Activated CD4-positive, alpha-beta T cell treated with anti-CD3 and anti-CD28 coated beads for 36 hours (primary cell): ENCODE measurements at regions of chr1 and their contacts with region 1.

Region 1: DNA sequence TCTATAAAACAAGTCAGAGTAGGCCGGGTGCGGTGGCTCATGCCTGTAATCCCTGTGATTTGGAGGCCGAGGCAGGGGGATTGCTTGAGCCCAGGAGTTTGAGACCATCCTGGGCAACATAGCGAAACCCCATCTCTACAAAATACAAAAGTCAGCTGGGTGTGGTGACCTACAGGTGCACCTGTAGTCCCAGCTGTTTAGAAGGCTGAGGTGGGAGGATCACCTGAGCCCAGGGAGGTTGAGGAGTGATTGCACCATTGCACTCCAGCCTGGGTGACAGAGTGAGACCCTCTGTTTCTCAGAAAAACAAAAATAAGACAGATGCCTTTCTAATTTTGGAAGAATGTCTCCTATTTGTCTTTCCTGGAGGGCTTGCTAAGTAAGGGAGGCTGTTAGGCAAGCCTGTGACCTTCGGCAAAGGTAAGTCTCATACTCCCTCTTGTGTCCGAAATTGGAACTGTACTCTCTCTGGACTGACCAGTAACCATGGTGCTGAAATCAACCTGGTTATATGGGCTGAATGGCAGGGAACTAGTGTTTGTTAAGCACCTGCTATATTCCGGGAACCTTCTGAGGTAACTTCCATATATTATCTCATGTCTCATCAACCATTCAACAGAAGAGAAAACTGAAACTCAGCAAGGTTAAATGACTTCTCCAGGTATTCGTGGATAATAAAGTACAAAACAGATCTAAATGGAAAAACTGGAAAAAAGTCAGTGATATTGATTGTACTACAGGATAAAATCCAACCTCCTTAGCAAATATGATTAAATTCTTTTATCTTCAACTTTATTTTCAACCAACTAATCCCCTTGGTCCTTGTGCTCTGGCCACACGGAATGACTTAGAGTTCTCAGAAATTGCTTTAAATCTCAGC is 11.8 kb upstream of the RAB3B start:
- DNase-seq: peak; percentile 52
- ATAC-seq: peak; percentile 95
- H3K4me3 Mint-ChIP-seq: no peak overlapping the region
- H3K27ac Mint-ChIP-seq: no peak overlapping the region
- H3K4me1 Mint-ChIP-seq: no peaks in the 10 kb centered on the region
- H3K27me3 Mint-ChIP-seq: peaks cover 14% of the 10 kb centered on the region

Region 2: DNA sequence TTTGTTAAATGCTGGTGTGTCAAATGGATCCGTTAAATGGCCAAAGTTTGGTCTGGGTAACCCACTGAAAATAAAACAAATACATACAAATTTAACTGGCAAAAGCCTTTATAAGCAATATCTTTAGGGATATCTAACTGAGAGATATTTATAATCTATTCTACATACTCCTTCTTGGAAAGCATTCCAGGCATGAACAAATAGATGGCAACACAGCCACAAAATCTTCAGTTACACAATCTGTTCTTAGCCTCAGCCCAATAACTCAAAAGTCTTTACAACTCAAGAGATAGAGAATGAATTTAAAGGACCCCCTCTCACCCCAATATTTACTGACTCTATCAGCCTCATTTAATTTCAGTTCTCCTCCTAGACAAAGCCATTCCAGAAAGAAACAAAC is 182.5 kb before region 1 on chr1:
- CTCF ChIA-PET with region 1: no interaction called
- POLR2A ChIA-PET with region 1: no interaction called
- intact Hi-C with region 1: loop called in 1 of 2 experiments (anchors 10 kb)
- DNase-seq: no peak
- ATAC-seq: no peak
- H3K4me3 Mint-ChIP-seq: no peak overlapping the region
- H3K27ac Mint-ChIP-seq: no peak overlapping the region
- H3K4me1 Mint-ChIP-seq: no peaks in the 10 kb centered on the region
- H3K27me3 Mint-ChIP-seq: no peaks in the 10 kb centered on the region